ENCODE measurements at regions of chrX and their contacts with region 1.

Region 1: DNA sequence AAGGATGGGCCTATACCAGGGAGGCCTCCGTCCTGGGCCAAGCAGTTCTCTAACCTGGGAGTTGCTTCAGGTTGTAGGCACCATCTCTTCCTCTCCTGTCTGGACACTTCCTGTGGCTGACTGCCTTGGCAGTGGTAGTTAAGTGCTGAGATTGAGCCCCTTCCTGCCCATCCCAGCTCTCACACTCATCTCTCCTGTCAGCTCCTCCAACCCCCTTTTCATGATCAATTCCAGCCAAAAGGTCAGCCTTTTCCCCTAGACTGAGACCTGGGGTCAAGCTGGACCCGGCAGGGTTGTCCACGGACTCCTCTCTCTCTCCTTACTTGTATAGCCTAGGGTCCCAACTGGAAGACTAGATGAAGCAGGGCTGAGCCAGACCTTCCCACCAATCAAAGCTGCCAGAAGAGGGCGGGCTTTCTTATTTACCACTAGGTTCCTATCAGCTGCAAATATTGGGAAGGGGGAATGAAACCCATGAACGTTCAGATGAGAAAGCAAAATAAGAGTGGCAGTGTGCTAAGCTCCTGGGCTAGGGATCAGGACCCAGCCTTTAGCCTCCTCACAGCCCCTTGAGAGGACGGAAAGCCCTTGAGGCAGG is 34.5 kb downstream of the KDM5C start:
- DNase-seq: no peak
- ATAC-seq: peak in 1 of 4 donors; percentile 27
- H3K4me3 ChIP-seq: no peak overlapping the region
- H3K27ac ChIP-seq: no peak overlapping the region
- H3K4me1 ChIP-seq: no peaks in the 10 kb centered on the region
- H3K27me3 ChIP-seq: no peaks in the 10 kb centered on the region
- CTCF ChIP-seq: no peak

Region 2: GRCh38 chrX:53048169-53049126 is 142.0 kb before region 1 on chrX and contains the start of gene GPR173:
- intact Hi-C with region 1: no loop called
- DNase-seq: peak in 2 of 6 donors; percentile 9 to 55
- ATAC-seq: peak; percentile 38 to 85 (median 78)
- H3K4me3 ChIP-seq: peak within 1 kb of the TSS in 1 of 4 donors; percentile 20
- H3K27ac ChIP-seq: no peak within 1 kb of the TSS
- H3K4me1 ChIP-seq: no peaks in the 10 kb centered on the region
- H3K27me3 ChIP-seq: peaks cover 0 to 2% (median 0%) of the 10 kb centered on the region in 4 donors
- CTCF ChIP-seq: no peak
- total RNA-seq, gene GPR173: 0.20 to 1.1 (median 0.38) TPM

Region 3: DNA sequence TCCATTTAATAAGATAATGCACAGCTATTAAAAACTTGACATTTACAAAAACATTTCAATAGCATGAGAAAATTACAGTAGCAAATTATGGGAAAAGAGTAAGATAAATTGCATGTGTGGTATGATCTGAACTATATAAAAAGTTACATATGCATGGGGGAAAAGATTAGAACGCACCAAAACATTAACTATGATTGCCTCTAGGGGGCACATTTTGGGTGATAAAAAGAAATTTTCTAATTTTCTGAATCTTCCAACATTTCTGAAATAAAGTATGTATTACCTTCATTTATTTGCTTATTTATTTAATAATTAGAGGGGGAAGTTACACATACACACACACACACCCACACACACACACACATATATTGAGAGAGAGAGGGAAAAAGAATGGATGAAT is 54.1 kb after region 1 on chrX:
- intact Hi-C with region 1: loop called in 1 of 3 experiments (anchors 5 kb)
- DNase-seq: no peak
- ATAC-seq: no peak
- H3K4me3 ChIP-seq: no peak overlapping the region
- H3K27ac ChIP-seq: no peak overlapping the region
- H3K4me1 ChIP-seq: no peaks in the 10 kb centered on the region
- H3K27me3 ChIP-seq: no peaks in the 10 kb centered on the region
- CTCF ChIP-seq: no peak